GM10248 (cell line): ENCODE measurements at regions of chr14 and their contacts with region 1.

Region 1: DNA sequence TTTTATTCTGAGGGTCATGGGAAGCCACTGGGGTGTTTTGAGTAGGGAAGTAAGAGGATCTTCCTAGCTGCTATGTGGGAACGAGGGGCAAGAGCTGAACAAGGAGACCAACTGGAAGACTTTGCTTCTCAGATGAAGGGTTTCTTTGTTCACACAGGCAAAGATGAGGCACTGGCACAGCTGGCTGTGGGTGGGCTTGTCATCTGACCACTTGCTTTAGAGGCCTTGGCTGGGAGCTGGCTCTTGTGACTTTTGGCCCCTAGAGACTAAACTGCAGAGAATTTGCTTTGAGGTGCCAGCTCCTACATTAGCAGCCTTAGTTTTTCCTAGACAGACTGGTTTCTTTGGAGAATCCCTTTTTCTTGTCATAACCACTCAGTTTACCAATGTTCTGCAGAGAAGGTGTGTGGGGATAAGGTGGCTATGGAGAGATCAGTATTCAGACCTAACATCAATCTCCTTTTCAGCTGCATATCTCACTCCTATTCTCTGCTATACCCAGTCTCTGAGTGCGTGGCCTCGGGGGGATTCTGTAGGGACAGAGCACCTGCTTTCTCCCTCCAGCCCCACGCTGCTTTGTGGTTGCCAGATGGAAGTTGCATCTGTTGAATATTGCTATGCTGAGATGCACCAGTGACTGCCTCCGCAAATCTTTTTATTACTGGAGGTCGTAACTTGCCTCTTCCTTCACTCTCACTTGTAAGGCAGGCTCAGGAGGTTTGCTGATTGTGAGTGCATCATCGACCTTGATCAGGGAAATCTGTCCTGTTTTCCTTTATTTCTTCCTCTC is 12.7 kb downstream of the PPP2R5C start:
- DNase-seq: no peak
- CTCF ChIP-seq: no peak

Region 2: DNA sequence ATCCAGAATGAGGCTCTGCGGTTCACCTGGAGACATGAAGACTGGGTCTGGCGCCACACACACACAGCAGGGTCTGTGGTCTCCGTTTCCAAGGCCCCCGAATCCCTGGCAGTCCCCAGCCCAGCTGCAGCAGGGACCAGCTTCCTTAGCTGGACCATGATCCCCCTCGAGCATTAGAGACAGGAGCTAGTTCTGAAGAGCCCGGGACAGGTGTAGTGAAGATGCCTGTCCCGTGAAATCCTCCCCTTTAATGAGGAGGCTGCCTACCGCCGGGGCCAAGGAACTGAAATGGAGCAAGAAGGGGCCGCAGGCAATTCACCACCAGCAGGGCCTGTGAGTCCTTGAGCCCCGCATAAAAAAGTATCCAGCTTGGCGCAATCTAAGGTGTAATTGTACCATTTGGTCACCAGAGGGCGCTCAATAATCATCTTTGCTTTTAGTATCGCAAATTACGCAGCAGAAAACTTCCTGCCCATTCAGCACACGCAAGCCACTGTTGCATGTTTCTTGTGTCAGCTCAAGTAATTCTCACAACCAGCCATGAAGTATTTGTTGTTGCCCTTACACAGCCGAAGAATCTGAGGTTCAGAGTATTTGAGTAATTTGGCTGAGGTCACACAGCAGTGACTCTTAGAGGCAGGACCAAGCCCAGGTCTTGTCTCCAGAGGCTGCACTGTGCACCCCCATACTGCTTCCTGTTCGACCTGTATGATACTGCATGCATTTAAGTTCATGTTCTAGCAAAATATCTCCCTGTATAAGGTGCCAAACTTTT is 66.9 kb before region 1 on chr14:
- CTCF ChIA-PET with region 1: interaction called, 14 read pairs
- POLR2A ChIA-PET with region 1: interaction called, 3 read pairs
- DNase-seq: peak; percentile 78
- CTCF ChIP-seq: peak; percentile 70

Region 3: DNA sequence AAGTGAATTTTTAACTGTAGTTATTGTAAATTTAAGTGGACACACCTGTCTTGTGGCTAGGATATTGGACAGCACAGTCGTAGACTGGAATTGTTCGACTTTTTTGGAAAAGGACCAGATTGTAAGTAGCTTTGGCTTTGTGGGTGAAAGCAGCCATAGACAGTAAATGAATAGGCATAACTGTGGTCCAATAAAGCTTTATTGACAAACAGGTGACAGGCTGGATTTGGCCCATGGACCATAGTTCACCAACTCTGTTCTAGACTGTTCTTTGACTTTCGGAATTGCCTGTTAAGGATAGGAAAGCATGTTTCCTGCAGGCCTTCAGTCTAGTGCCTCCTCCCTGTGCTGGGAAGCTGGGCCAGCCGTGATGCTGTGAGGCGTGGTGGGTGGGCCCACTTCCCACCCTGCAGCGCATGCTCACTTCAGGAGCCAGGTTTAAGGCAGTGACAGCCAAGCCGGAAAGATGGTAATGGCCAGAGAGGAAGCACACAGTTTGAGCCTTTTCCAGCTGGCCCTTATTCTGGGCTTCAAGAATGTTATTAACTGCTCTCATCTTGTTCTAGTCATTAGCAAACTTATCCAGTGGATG is 39.1 kb after region 1 on chr14:
- CTCF ChIA-PET with region 1: interaction called, 17 read pairs
- POLR2A ChIA-PET with region 1: interaction called, 4 read pairs
- DNase-seq: no peak
- CTCF ChIP-seq: no peak

Region 4: GRCh38 chr14:101843665-101844064 is 69.5 kb after region 1 on chr14:
- CTCF ChIA-PET with region 1: interaction called, 27 read pairs
- POLR2A ChIA-PET with region 1: no interaction called
- DNase-seq: peak; percentile 65
- CTCF ChIP-seq: peak; percentile 60

Region 5: DNA sequence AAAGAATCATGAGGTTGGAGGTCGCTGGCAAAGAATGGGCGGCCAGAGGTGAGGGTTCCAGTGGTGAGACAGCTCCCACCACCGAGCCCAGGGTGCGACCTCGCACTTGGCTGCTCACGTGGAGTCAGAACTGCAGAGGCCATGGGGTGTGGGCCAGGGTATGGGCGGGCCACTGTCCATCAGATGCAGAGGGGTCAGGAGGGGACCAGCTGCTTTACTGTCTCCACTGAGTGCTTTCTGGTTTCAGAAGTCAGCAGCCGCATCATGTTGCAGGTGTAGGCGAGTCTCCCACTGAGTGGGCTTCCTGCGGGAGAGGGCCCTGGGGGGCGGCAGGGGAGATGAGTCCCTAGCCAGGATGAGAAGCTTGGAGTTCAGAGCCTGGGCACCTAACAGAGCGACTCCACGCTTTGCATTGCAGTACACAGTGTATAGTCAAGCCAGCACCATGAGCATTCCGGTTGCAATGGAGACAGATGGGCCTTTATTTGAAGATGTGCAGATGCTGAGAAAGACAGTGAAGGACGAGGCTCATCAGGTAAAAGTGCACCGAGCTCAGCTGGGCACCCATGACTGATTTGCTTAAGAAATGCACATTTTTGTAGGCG is 143.3 kb after region 1 on chr14:
- CTCF ChIA-PET with region 1: interaction called, 16 read pairs
- POLR2A ChIA-PET with region 1: no interaction called
- DNase-seq: no peak
- CTCF ChIP-seq: no peak

Region 6: DNA sequence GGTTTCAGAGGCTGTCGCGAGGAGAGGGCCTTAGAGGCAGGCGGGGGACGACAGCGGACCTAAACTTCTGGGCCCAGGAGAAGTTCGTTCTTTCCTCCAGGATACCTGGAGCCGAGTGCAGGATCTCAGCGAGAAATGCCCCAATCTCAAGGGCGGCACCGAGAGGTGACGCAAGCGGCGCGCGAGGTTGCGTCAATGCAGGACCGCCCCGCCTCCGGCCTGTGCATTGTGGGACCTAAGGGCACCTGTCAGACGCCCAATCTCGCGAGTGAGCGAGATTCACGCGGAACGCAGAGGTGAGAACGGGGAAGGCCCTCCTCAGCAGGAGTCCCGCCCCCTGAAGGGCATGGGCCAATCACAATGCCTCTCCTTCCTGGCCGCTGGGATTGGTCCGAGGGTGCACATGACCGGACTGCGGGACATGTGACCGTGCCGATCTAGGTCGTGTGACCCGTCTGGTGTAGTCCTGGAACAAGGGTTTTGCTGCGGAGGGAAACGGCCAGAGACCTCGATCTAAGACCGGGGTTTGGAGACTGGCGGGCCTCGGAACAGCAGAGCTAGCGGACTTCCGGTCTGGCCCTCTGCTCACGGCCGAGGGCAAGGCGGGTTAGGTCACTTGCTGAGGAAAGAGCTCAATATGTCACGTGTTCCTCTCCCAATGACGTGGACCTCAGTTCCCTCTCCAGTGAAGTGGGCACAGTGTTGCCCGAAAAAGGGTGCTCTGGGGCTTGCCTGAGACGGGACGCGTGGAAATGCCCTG is 173.9 kb after region 1 on chr14:
- CTCF ChIA-PET with region 1: interaction called, 14 read pairs
- POLR2A ChIA-PET with region 1: no interaction called
- DNase-seq: peak; percentile 100
- CTCF ChIP-seq: no peak